Activated T-helper 2 cell treated with anti-CD3 and anti-CD28 coated beads, Interferon-gamma antibody, Interleukin-2, Interleukin-4, amounts not matched to agents 10 μg/mL and 5 μg/mL and 100 μg/mL, durations not matched to agents 14 hours and 24 hours and 36 hours (primary cell): ENCODE measurements at regions of chr5 and their contacts with region 1.

Region 1: GRCh38 chr5:18761801-18762200 is 1127.5 kb downstream of the TAF11L14 start:
- DNase-seq: no peak
- H3K4me3 Mint-ChIP-seq: no peak overlapping the region
- H3K27ac Mint-ChIP-seq: no peak overlapping the region
- H3K4me1 Mint-ChIP-seq: peaks cover 4% of the 10 kb centered on the region
- H3K27me3 Mint-ChIP-seq: peaks cover 3% of the 10 kb centered on the region

Region 2: GRCh38 chr5:17813214-17813613 is 948.6 kb before region 1 on chr5:
- intact Hi-C with region 1: loop called (anchors 10 kb)
- DNase-seq: no peak
- H3K4me3 Mint-ChIP-seq: no peak overlapping the region
- H3K27ac Mint-ChIP-seq: no peak overlapping the region
- H3K4me1 Mint-ChIP-seq: no peaks in the 10 kb centered on the region
- H3K27me3 Mint-ChIP-seq: no peaks in the 10 kb centered on the region

Region 3: DNA sequence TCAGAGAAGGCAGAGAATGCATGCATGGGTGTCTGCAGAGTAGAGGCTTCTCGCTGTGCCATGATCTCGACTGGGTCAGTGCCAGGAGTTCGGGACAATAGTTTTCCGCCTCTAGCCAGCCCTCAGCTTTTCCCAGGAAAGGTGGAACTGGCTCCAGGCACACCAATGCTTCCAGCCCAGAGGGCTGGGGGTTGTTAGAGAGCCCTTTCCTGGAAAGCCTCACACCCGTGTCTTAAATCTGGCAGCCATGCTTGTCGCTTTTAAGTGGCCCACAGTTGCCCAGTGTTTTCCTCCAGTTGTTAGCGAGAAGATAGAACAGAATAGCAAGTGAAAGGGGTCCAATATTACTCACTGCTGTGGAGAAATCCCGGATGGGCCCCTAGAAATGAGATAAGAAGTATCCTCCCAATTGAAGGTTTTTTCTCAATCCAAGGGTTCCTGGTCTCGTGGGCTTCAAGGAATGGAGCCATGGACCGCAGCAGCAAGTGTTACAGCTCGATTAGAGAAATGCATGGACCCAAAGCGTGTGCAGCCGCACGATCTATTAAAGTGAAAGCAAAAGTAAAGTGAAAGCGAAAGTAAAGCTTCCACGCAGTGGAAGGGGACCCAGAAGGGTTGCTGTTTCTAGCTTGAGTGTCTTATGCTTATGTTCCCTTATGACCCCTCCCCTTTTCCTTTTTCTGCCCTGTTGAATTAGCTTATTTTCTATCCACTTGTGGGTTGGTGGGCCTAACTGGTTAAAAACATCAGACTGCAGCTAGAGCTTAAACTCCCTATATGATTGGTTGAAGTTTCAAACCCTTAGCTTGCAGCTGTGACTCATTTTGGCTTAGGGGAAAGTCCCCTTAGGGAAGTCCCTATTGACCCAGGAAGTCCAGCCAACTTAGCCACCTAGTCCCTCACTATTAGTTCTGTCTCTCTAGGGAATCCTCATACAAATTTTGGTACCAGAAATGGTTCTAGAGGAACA is 15.9 kb before region 1 on chr5:
- intact Hi-C with region 1: loop called (anchors 2 kb)
- DNase-seq: peak; percentile 38
- H3K4me3 Mint-ChIP-seq: peak overlapping the region; percentile 89
- H3K27ac Mint-ChIP-seq: peak overlapping the region; percentile 95
- H3K4me1 Mint-ChIP-seq: peaks cover 50% of the 10 kb centered on the region
- H3K27me3 Mint-ChIP-seq: no peaks in the 10 kb centered on the region